Activated CD4-positive, alpha-beta memory T cell treated with anti-CD3 and anti-CD28 coated beads, Interleukin-2, amount 10 ng/mL, durations not matched to agents 7 days and 5 days (primary cell): ENCODE measurements at regions of chr2 and their contacts with region 1.

Region 1: DNA sequence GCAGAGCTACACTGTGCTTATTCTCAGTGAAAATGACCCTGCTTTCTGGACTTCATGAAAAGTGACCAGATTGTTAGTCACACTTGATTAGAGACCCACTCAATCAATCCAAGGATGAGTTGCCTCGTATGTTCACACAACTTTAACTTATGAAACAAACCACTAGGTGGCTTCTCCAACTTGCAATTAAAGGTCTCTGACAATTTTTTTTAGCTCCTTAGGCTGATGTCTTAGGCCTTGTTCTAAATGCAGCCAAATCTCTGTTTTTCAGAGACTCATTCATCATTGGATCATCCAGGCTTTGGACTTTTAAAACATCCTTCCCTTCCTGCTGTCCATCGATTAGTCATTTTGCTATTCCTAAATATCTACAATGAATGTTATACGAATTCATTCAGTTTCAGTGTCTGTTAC is 63.4 kb downstream of the MREG start:
- DNase-seq: no peak
- H3K4me3 Mint-ChIP-seq: no peak overlapping the region
- H3K27ac Mint-ChIP-seq: no peak overlapping the region
- H3K4me1 Mint-ChIP-seq: peaks cover 12% of the 10 kb centered on the region
- H3K27me3 Mint-ChIP-seq: no peaks in the 10 kb centered on the region

Region 2: GRCh38 chr2:215969131-215969841 is 19.3 kb after region 1 on chr2:
- CTCF ChIA-PET with region 1: interaction called, 12 read pairs
- POLR2A ChIA-PET with region 1: no interaction called
- DNase-seq: no peak
- H3K4me3 Mint-ChIP-seq: no peak overlapping the region
- H3K27ac Mint-ChIP-seq: no peak overlapping the region
- H3K4me1 Mint-ChIP-seq: peaks cover 59% of the 10 kb centered on the region
- H3K27me3 Mint-ChIP-seq: no peaks in the 10 kb centered on the region

Region 3: DNA sequence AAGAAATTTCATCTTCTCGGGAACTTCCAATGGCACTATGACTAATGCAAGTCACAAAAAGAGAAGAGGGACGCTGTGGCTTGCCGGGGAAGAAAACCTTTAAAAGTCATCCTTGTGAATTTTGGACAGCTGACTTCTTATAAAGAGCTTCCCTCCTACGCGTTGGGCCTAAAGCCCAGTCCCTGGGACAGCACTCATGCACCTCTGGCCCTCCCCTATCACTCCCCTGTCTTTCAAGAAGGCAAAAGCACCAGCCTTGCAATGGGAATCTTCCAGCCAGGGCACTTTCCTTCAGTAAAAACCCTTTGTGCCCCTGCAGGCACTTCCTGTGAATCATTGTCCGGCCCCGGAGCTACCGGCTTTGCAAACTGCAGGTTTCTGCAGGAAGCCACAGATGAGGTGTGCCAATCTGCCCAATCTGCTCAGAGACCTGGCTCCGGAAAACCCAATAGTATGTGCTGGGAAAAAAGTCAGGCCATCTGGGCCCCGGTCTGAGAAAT is 56.2 kb after region 1 on chr2:
- CTCF ChIA-PET with region 1: interaction called, 18 read pairs
- POLR2A ChIA-PET with region 1: no interaction called
- DNase-seq: peak; percentile 65
- H3K4me3 Mint-ChIP-seq: peak overlapping the region; percentile 53
- H3K27ac Mint-ChIP-seq: peak overlapping the region; percentile 84
- H3K4me1 Mint-ChIP-seq: peaks cover 63% of the 10 kb centered on the region
- H3K27me3 Mint-ChIP-seq: no peaks in the 10 kb centered on the region

Region 4: DNA sequence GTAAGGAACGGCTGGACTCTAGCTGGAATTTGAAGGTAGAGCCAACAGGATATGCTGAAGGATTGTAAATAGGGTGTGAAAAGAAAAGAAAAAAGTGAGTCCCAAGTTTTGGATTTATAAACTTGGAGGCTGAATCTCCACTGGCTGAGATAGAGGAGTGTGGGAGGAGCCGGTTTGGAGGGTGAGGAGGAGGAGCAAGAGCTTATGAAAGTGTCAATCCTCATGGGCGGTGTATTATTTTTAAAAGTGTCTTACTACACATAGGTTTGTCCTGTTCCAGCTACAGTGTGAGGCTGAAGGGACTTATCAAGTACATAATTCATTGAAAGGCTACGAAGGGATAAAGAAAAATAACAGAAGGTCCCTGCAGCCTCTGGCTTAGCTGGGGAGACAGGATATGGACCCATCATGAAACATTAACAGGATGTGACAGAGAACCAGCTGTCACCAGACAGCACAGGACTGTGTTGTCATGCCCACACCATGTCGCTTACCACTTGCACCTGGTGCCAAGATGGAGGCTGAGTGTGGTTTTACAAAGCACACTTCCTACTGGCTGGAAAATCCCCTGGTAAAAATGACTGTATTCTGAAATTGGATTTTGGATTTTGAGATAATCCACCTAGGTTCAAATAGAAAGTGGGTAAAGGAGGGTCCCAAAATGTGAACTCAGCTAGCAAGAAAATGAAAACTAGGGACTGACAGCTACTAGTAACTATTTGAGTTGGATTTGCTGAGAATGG is 65.9 kb after region 1 on chr2:
- CTCF ChIA-PET with region 1: interaction called, 68 read pairs
- POLR2A ChIA-PET with region 1: interaction called, 3 read pairs
- DNase-seq: peak; percentile 74
- H3K4me3 Mint-ChIP-seq: peak overlapping the region; percentile 25
- H3K27ac Mint-ChIP-seq: peak overlapping the region; percentile 91
- H3K4me1 Mint-ChIP-seq: peaks cover 62% of the 10 kb centered on the region
- H3K27me3 Mint-ChIP-seq: no peaks in the 10 kb centered on the region

Region 5: DNA sequence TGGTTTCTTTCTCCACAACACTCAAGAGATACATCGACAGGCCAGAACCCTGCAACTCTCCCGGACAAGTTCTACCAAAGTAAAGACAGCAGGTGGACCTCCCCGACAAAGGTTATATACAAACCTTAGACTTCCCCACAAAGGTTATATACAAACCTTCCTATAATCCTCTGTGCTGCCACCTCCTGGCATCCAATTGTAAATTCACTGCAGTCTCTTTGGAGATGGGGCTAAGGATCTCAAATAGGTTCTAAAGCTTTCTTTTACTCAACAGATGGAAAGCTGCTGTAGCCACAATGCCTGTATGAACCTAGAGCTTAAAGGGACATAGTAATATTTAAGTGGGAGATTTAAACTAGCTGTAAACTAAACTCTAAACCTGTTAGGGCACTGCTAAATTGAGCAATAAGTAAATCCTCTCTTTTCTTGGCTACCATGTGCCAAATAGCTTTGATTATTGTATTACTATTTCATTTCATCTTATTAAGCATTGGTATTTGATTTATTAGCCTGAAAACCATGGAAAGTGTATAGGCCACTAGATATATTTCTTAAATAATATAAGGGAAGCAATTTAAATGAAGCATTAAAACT is 73.2 kb after region 1 on chr2:
- CTCF ChIA-PET with region 1: interaction called, 68 read pairs
- POLR2A ChIA-PET with region 1: no interaction called
- DNase-seq: peak; percentile 59
- H3K4me3 Mint-ChIP-seq: no peak overlapping the region
- H3K27ac Mint-ChIP-seq: no peak overlapping the region
- H3K4me1 Mint-ChIP-seq: peaks cover 6% of the 10 kb centered on the region
- H3K27me3 Mint-ChIP-seq: no peaks in the 10 kb centered on the region

Region 6: DNA sequence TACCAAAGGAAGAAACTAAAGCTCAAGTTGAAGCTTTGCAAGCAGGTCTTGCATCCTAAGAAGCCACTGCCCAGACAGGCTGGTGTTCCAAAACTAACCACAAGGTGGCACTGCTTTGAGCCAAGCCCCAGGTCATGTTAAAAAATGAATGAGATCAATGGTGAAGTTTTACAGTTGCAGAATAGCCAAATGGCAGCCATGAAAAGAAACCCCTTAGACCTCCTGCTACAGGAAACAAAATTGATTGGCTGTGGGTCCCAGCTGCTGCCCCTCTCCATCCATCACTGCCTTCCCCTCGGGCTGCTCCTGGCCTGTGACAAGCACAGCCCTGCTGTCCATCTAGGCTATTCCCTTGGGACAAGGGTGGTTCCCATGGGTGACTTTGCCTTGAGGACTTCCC is 84.1 kb after region 1 on chr2:
- CTCF ChIA-PET with region 1: interaction called, 20 read pairs
- POLR2A ChIA-PET with region 1: no interaction called
- DNase-seq: peak; percentile 83
- H3K4me3 Mint-ChIP-seq: no peak overlapping the region
- H3K27ac Mint-ChIP-seq: no peak overlapping the region
- H3K4me1 Mint-ChIP-seq: peaks cover 49% of the 10 kb centered on the region
- H3K27me3 Mint-ChIP-seq: no peaks in the 10 kb centered on the region

Region 7: DNA sequence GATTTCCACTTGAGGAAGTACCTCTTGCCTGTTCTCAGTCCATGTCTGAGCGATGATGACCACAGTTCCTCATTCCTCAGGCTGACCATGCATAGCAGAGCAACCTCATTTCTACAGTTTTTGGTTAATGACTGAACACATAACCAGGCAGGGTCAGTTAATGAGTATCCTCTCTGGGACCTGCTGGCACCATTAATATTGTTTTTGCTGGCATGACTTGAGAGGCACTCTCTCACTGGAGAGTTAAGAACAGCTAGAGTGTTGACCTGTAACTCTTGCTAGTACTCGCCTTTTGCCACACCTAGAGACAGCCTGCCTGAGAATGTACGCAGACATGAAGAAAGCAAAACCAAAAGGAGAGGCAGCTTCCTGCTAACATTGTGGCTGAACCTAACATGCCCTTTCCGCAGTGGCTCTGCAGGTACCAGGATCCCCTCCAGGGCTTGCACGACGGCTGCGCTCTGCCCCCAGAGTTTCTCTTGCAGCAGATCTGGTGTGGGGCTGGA is 107.7 kb after region 1 on chr2:
- CTCF ChIA-PET with region 1: interaction called, 10 read pairs
- POLR2A ChIA-PET with region 1: no interaction called
- DNase-seq: peak; percentile 71
- H3K4me3 Mint-ChIP-seq: peak overlapping the region; percentile 64
- H3K27ac Mint-ChIP-seq: peak overlapping the region; percentile 95
- H3K4me1 Mint-ChIP-seq: peaks cover 41% of the 10 kb centered on the region
- H3K27me3 Mint-ChIP-seq: no peaks in the 10 kb centered on the region